GM23248 (cell line): ENCODE measurements at regions of chr10 and their contacts with region 1.

Region 1: DNA sequence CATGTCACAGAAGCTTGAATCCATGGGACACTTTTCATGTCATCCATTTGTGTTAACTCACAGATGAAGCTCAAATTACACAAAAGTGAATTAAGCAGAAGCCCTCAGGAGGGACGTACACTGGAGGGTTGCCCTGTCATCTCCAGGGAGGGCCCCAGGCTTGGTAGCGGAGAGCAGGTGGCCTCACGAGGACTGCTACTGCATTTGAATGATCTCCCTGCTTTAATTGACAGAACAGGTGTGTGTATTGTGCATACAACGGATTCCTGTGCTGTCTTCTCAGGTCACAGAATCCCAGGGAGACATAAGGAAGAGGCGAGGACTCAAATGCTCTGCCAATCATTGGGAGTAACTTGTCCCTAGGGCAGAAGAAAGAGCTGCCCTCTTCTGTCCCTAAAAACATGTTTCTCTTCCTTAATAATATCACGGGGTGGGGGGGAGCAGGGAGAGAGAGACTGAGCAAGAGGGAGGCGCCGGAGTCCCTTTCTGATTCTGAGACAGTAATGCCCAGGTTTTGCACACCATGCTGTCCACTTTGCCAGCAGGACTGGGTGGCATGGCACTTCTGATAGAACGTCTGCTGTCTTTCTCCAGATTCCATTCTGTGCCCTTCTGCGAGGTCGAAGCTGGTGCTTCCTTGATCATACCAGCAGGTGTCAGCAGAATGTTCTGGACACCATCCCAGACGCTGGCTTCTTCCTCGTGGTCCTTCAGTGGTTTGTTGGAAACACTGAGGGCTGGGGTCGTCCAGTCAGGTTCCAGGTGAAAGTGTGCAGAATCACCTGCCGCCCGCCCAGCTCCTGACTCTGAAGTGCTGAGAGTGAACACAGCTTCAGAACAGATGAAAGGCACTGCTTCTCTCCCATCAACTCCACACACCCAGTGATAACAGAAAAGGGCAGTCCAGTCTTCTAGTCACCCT is 26.2 kb upstream of the RASGEF1A start:
- DNase-seq: peak; percentile 72
- H3K4me3 ChIP-seq: no peak overlapping the region
- H3K27ac ChIP-seq: no peak overlapping the region
- H3K4me1 ChIP-seq: no peaks in the 10 kb centered on the region
- H3K27me3 ChIP-seq: peaks cover 45% of the 10 kb centered on the region

Region 2: GRCh38 chr10:43461950-43462349 is 168.9 kb after region 1 on chr10:
- in situ Hi-C with region 1: loop called (anchors 10 kb)
- DNase-seq: peak; percentile 87
- H3K4me3 ChIP-seq: peak overlapping the region; percentile 60
- H3K27ac ChIP-seq: no peak overlapping the region
- H3K4me1 ChIP-seq: no peaks in the 10 kb centered on the region
- H3K27me3 ChIP-seq: no peaks in the 10 kb centered on the region